ENCODE measurements at regions of chr3 and their contacts with region 1.

Region 1: DNA sequence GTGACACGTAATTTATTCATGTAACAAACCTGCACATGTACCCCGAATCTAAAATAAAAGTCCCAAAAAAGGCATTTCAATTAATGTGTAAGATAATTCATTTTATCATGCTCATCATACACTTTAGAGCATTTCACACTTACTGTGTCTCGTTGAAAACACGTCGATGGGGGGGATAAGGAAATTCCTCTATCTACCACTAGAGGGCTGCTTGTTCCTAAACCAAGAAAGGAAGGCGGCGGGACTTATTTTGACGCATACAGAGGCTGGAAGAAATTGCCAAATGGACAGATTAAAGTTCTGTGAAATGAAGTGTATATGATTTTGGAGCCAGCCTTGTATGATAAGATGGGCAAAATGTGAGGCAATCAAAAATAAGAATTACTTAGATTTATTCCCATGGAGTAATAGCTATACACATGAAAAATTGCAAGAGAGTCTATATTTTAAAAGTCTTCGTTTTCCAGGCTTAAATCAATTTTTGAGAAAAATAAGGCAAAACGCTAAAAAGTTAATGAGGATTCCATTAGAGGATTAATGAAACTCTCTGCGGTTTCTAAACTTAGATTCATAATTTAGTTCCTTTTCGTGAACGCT is 346.8 kb downstream of the CNTN3 start:
- DNase-seq: peak; percentile 51
- H3K4me3 Mint-ChIP-seq: no peak overlapping the region
- H3K27ac Mint-ChIP-seq: no peak overlapping the region
- H3K4me1 Mint-ChIP-seq: no peaks in the 10 kb centered on the region
- H3K27me3 Mint-ChIP-seq: no peaks in the 10 kb centered on the region
- CTCF ChIP-seq: peak; percentile 57

Region 2: GRCh38 chr3:74214286-74214685 is 53.4 kb before region 1 on chr3:
- CTCF ChIA-PET with region 1: no interaction called
- POLR2A ChIA-PET with region 1: no interaction called
- intact Hi-C with region 1: no loop called
- DNase-seq: peak; percentile 22
- H3K4me3 Mint-ChIP-seq: no peak overlapping the region
- H3K27ac Mint-ChIP-seq: no peak overlapping the region
- H3K4me1 Mint-ChIP-seq: no peaks in the 10 kb centered on the region
- H3K27me3 Mint-ChIP-seq: no peaks in the 10 kb centered on the region
- CTCF ChIP-seq: no peak

Region 3: DNA sequence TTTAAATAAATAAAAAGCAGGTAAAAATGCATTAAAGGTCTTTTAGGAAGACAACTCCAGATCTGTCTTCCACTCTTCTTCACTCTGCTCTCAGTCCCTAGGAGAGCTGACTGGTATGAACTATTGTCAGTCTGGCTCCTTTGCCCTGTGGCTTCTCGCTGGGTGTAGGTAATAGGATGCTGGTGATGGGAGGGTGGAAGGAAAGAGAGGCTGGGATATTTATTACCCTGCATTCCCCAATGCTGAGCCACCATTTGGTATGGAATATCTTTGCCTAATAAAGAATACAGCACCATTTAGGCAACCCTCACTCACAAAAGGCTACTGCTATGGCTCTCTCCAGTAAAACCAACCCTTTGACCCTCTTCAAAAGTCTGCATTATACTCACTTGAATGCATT is 19.9 kb after region 1 on chr3:
- CTCF ChIA-PET with region 1: no interaction called
- POLR2A ChIA-PET with region 1: no interaction called
- intact Hi-C with region 1: no loop called
- DNase-seq: no peak
- H3K4me3 Mint-ChIP-seq: no peak overlapping the region
- H3K27ac Mint-ChIP-seq: no peak overlapping the region
- H3K4me1 Mint-ChIP-seq: no peaks in the 10 kb centered on the region
- H3K27me3 Mint-ChIP-seq: no peaks in the 10 kb centered on the region
- CTCF ChIP-seq: no peak

Region 4: DNA sequence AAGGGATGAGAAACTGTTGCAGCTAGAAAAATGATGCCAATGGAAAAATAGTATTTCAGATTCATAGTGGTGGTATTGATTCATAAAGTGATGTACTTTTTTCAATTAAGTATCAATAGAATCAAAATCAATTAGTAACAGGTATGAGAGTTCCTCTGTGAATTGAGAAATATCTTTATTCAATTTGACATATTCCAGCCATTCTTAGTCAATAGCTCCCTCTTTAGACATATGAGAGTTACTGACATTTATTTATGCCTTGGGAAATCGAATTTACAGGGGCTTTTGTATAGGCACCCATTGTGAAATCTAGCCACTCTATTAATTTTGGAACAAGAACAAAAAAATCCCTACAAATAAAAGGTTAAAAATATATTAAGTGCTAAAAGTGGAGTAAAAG is 733.6 kb after region 1 on chr3:
- CTCF ChIA-PET with region 1: no interaction called
- POLR2A ChIA-PET with region 1: no interaction called
- intact Hi-C with region 1: loop called (anchors 10 kb)
- DNase-seq: peak; percentile 25
- H3K4me3 Mint-ChIP-seq: no peak overlapping the region
- H3K27ac Mint-ChIP-seq: no peak overlapping the region
- H3K4me1 Mint-ChIP-seq: no peaks in the 10 kb centered on the region
- H3K27me3 Mint-ChIP-seq: no peaks in the 10 kb centered on the region
- CTCF ChIP-seq: peak; percentile 37

Region 5: DNA sequence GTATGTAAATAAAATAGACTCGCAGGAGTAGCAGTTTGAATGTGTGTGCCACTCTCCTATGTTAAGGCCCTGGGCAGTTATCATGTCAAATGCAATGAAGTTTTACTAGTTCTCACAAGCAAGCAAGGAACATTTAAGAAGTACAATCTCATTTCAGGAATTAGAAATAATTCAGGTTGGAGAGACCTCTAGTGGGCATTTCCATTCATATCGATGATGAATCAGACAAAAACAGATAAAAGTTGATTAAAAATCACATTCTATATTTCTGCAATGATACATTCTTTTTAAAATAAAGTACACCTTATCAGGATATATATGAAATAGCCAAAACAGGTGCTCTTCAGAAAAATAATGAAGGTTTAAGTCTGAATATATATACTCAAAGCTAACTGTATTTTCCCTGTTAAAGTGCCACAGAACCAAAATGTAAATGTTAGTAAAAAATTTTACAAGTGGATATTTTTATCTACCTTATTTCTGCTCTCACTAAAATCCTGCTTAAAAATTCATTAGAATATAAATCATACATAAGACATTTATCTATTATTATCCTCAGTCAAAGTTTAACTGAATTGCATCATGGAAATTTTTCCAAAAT is 904.0 kb after region 1 on chr3:
- CTCF ChIA-PET with region 1: interaction called, 3 read pairs
- POLR2A ChIA-PET with region 1: no interaction called
- intact Hi-C with region 1: loop called (anchors 5 kb)
- DNase-seq: peak; percentile 9
- H3K4me3 Mint-ChIP-seq: no peak overlapping the region
- H3K27ac Mint-ChIP-seq: no peak overlapping the region
- H3K4me1 Mint-ChIP-seq: no peaks in the 10 kb centered on the region
- H3K27me3 Mint-ChIP-seq: peaks cover 11% of the 10 kb centered on the region
- CTCF ChIP-seq: no peak